ENCODE measurements at regions of chr20 and their contacts with region 1.

Region 1: GRCh38 chr20:39880887-39881286 is 808.1 kb downstream of the MAFB start:
- DNase-seq: no peak
- H3K4me3 ChIP-seq: no peak overlapping the region
- H3K27ac ChIP-seq: no peak overlapping the region
- H3K27me3 ChIP-seq: peaks cover 0 to 16% (median 0%) of the 10 kb centered on the region in 45 donors
- CTCF ChIP-seq: no peak

Region 2: GRCh38 chr20:39627765-39628164 is 253.1 kb before region 1 on chr20:
- intact Hi-C with region 1: loop called in 1 of 2 experiments (anchors 5 kb)
- DNase-seq: no peak
- H3K4me3 ChIP-seq: no peak overlapping the region
- H3K27ac ChIP-seq: no peak overlapping the region
- H3K27me3 ChIP-seq: peaks cover 0 to 14% (median 0%) of the 10 kb centered on the region in 45 donors
- CTCF ChIP-seq: no peak

Region 3: GRCh38 chr20:40010483-40010882 is 129.6 kb after region 1 on chr20:
- intact Hi-C with region 1: no loop called
- DNase-seq: no peak
- H3K4me3 ChIP-seq: no peak overlapping the region
- H3K27ac ChIP-seq: no peak overlapping the region
- H3K27me3 ChIP-seq: peaks cover 0 to 4% (median 0%) of the 10 kb centered on the region in 45 donors
- CTCF ChIP-seq: no peak